GM12878 (cell line): ENCODE measurements at regions of chr3 and their contacts with region 1.

Region 1: DNA sequence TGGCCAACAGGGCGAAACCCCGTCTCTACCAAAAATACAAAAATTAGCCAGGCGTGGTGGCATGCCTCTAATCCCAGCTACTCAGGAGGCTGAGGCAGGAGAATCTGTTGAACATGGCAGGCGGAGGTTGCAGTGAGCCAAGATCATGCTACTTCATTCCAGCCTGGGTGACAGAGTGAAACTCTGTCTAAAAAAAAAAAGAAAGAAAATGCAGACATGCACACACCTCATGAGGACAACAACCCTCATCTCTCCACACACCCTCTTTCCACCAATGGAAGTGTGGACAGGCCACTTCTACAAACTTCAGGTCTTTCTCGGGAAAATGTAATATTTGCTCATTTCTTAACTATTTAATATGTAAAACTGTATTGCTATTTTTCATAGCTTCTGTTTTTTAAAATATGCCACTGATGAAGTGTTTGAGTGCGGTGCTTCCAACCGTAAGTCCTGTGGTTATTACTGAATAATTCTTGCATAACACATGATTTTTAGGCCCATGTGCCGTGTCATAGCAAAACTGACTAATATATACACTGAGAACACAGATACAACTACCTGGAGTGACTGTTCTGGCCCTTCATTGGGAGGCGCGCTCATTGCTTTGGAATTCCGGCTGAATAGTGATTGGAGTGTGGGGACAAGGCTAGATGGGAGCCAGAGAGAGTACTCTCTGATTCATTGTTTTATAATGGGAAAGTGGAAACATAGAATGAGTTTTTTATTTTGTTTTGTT is 23.1 kb downstream of the LRRC31 start:
- DNase-seq: peak; percentile 46
- ATAC-seq: peak; percentile 95
- H3K4me3 ChIP-seq: peak overlapping the region; percentile 21; the same call in 1 of the 2 replicates
- H3K27ac ChIP-seq: peak overlapping the region; percentile 53
- H3K4me1 ChIP-seq: peaks cover 19% of the 10 kb centered on the region
- H3K27me3 ChIP-seq: peaks cover 0 to 4% of the 10 kb centered on the region in 2 experiments; a peak in 2 of 4 replicates
- CTCF ChIP-seq: no peak
- EP300 ChIP-seq: peak; percentile 26 to 47; a peak in 1 of 4 replicates
- POLR2A ChIP-seq: no peak
- RAD21 ChIP-seq: no peak

Region 2: GRCh38 chr3:169748670-169749069 is 98.0 kb before region 1 on chr3:
- CTCF ChIA-PET with region 1: no interaction called
- POLR2A ChIA-PET with region 1: no interaction called
- RAD21 ChIA-PET with region 1: no interaction called
- SMC1A ChIA-PET with region 1: no interaction called
- in situ Hi-C with region 1: no loop called
- intact Hi-C with region 1: no loop called
- DNase-seq: no peak
- ATAC-seq: no peak
- H3K4me3 ChIP-seq: no peak overlapping the region
- H3K27ac ChIP-seq: no peak overlapping the region
- H3K4me1 ChIP-seq: peaks cover 4% of the 10 kb centered on the region; the same call in 1 of the 2 replicates
- H3K27me3 ChIP-seq: no peaks in the 10 kb centered on the region
- CTCF ChIP-seq: no peak
- EP300 ChIP-seq: no peak
- POLR2A ChIP-seq: no peak
- RAD21 ChIP-seq: no peak

Region 3: GRCh38 chr3:169836078-169836941 is 10.3 kb before region 1 on chr3:
- CTCF ChIA-PET with region 1: interaction called, 3 read pairs
- POLR2A ChIA-PET with region 1: no interaction called
- RAD21 ChIA-PET with region 1: no interaction called
- SMC1A ChIA-PET with region 1: interaction called, 14 read pairs
- in situ Hi-C with region 1: no loop called
- intact Hi-C with region 1: no loop called
- DNase-seq: peak; percentile 27
- ATAC-seq: peak; percentile 95
- H3K4me3 ChIP-seq: no peak overlapping the region
- H3K27ac ChIP-seq: peak overlapping the region; percentile 81
- H3K4me1 ChIP-seq: peaks cover 25% of the 10 kb centered on the region
- H3K27me3 ChIP-seq: peaks cover 0 to 1% of the 10 kb centered on the region in 2 experiments; a peak in 1 of 4 replicates
- CTCF ChIP-seq: no peak
- EP300 ChIP-seq: 0 out of 4 replicates have a peak, but pooled peaks of 1 of the 2 experiments have one; percentile 44
- POLR2A ChIP-seq: no peak
- RAD21 ChIP-seq: no peak

Region 4: GRCh38 chr3:169863458-169863899 is 16.9 kb after region 1 on chr3:
- CTCF ChIA-PET with region 1: interaction called, 11 read pairs
- POLR2A ChIA-PET with region 1: interaction called, 4 read pairs
- RAD21 ChIA-PET with region 1: no interaction called
- SMC1A ChIA-PET with region 1: no interaction called
- in situ Hi-C with region 1: no loop called
- intact Hi-C with region 1: no loop called
- DNase-seq: peak; percentile 61
- ATAC-seq: peak; percentile 81
- H3K4me3 ChIP-seq: no peak overlapping the region
- H3K27ac ChIP-seq: no peak overlapping the region
- H3K4me1 ChIP-seq: peaks cover 16% of the 10 kb centered on the region
- H3K27me3 ChIP-seq: no peaks in the 10 kb centered on the region; a peak in 1 of 4 replicates
- CTCF ChIP-seq: peak; percentile 93 to 96 (median 93); a peak in 5 of 6 replicates
- EP300 ChIP-seq: no peak
- POLR2A ChIP-seq: no peak
- RAD21 ChIP-seq: peak; percentile 99